Naive thymus-derived CD8-positive, alpha-beta T cell (primary cell): ENCODE measurements at regions of chr12 and their contacts with region 1.

Region 1: DNA sequence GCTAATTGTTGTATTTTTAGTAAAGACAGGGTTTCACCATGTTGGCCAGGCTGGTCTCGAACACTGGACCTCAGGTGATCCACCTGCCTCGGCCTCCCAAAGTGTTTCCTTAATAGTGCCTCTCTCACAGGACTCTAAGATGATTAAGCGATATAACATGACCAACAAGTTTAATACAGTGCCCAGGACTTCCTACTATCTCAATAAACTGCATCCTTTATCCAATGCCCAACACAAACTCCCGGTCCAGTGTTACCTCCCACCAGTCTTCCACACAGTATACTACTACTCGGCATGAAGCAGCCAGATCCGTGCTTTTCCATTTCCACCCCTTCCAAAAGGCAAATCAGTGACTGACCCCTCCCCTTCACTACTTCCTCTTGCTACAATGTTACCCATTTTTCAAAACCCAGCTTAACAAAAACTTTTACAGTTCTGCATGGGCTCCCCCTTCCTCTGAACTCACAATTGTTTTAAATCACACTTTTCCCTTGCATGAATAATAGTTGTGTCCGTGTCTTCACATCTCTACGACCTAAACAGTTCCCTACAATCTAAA is 900 bp downstream of the NOP2 start:
- DNase-seq: no peak
- ATAC-seq: no peak
- H3K4me3 Mint-ChIP-seq: peak overlapping the region; percentile 95 to 100 (median 100)
- H3K27ac Mint-ChIP-seq: peak overlapping the region; percentile 95 to 100 (median 99)
- H3K4me1 Mint-ChIP-seq: peaks cover 29 to 56% (median 48%) of the 10 kb centered on the region in 4 donors
- H3K27me3 Mint-ChIP-seq: no peaks in the 10 kb centered on the region

Region 2: DNA sequence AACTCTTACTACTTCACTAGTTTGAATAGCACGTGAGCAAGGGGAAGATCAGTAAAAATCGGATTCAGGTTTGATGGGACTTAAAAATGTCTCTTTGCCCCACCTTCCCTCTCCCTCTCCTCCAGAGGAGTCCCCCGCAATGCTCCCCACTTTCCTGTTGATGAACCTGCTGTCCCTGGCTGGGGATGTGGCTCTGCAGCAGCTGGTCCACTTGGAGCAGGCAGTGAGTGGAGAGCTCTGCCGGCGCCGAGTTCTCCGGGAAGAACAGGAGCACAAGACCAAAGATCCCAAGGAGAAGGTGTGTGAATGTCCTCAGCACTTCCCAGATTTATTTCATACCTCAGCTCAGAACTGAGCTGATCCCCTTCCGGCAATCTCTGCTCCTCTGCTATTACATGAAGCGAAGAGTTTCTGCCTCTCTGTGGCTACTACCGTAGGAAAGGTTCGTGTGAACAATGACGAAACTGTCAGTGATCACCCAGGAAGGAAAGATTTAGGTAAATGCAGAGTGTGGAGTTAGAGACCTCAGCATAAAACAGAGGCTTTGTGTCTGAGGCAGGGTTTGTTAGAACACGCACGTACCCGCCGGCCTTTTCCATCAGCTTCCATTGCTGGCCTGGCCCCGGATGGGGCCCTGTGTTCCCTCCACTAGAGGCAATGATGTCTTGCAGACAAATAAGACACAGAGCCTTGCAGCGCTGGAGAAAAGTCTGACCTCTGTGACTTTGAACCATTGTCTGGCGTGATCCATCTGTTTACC is 40.2 kb before region 1 on chr12:
- POLR2A ChIA-PET with region 1: no interaction called
- DNase-seq: no peak
- ATAC-seq: no peak
- H3K4me3 Mint-ChIP-seq: no peak overlapping the region
- H3K27ac Mint-ChIP-seq: peak overlapping the region in 1 of 10 donors; percentile 48
- H3K4me1 Mint-ChIP-seq: peaks cover 0 to 2% (median under 1%) of the 10 kb centered on the region in 4 donors
- H3K27me3 Mint-ChIP-seq: no peaks in the 10 kb centered on the region

Region 3: DNA sequence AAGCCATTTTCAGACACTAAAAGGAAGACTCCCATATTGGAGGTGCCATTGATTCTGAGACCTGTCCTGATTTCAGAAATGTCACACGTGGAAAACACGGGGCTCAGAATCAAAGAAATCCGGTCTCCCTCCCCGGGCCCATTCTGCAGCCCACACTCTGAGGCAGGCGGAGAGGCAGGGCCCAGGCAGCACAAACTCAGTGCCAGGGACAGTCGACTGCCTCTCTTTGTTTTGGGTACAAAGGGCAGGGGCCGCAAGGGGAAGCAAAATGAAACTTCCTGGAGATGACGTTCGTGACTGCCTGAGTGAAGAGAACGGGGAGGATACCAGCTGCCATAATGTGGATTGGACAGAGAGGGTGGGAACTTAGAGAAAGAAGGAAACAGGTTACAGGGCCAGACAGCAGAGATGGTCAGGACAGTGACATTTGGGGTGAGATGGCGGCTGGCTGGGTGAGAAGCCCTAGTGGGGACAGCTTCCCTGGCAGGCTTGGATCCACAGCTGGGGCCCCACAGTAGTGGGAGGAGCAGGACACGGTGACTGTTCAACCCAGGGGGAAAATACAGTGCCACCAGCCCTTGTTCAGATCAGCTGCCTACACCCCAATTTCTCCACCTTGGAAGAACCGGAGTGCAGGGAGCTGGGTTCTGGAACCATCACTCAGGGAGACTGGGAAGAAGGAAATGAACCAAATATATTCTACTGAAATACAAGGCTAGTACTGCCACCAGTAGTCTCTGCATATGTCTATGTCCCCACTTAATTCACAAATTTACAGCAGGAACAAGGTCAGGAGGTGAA is 24.8 kb before region 1 on chr12:
- POLR2A ChIA-PET with region 1: no interaction called
- DNase-seq: no peak
- ATAC-seq: peak in 1 of 2 donors; percentile 37
- H3K4me3 Mint-ChIP-seq: no peak overlapping the region
- H3K27ac Mint-ChIP-seq: peak overlapping the region in 9 of 10 donors; percentile 40 to 84 (median 64)
- H3K4me1 Mint-ChIP-seq: peaks cover 12 to 35% (median 28%) of the 10 kb centered on the region in 4 donors
- H3K27me3 Mint-ChIP-seq: no peaks in the 10 kb centered on the region

Region 4: GRCh38 chr12:6613776-6614512 is 46.8 kb after region 1 on chr12:
- POLR2A ChIA-PET with region 1: interaction called, 12 read pairs
- DNase-seq: peak in 8 of 10 donors; percentile 33 to 81 (median 51)
- ATAC-seq: peak; percentile 24 to 45
- H3K4me3 Mint-ChIP-seq: peak overlapping the region in 8 of 10 donors; percentile 9 to 81 (median 63)
- H3K27ac Mint-ChIP-seq: peak overlapping the region; percentile 54 to 97 (median 88)
- H3K4me1 Mint-ChIP-seq: peaks cover 36 to 65% (median 61%) of the 10 kb centered on the region in 4 donors
- H3K27me3 Mint-ChIP-seq: no peaks in the 10 kb centered on the region

Region 5: DNA sequence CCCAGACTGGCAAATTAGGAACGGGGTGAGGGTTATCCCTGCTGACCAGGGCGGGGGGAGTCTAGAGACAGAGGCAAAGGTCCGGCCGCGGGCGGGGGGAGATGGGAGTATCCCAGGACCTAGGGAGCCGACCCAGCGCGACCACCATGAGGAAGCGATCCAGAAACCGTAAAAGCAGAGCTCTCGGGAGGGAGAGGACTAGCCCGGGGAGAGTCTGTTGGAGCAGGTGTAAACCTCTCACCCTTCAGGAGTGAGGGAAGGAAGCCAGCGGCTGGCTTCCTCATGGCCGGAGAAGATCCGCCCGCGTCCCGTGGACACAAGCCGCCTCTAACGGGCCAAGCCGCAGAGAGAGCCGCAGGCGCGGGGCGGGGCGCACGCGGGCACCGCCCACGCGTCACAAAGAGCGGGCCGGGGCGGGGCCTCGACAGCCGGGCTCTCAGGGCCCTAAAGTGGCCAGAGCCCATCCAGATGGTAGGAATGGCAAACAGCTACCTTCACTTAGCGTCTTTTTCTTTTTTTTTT is 80.0 kb after region 1 on chr12 and contains the start of gene ACRBP:
- POLR2A ChIA-PET with region 1: no interaction called
- DNase-seq: peak in 5 of 10 donors; percentile 20 to 51 (median 25)
- ATAC-seq: peak; percentile 70 to 91
- H3K4me3 Mint-ChIP-seq: peak within 1 kb of the TSS; percentile 69 to 86 (median 78)
- H3K27ac Mint-ChIP-seq: peak within 1 kb of the TSS in 7 of 10 donors; percentile 25 to 87 (median 63)
- H3K4me1 Mint-ChIP-seq: peaks cover 13 to 38% (median 25%) of the 10 kb centered on the region in 4 donors
- H3K27me3 Mint-ChIP-seq: no peaks in the 10 kb centered on the region
- polyA plus RNA-seq, gene ACRBP: 0.43 to 0.50 TPM in 2 of 3 donors, not detected in the other